Endothelial cell of umbilical vein (primary cell): ENCODE measurements at regions of chr3 and their contacts with region 1.

Region 1: DNA sequence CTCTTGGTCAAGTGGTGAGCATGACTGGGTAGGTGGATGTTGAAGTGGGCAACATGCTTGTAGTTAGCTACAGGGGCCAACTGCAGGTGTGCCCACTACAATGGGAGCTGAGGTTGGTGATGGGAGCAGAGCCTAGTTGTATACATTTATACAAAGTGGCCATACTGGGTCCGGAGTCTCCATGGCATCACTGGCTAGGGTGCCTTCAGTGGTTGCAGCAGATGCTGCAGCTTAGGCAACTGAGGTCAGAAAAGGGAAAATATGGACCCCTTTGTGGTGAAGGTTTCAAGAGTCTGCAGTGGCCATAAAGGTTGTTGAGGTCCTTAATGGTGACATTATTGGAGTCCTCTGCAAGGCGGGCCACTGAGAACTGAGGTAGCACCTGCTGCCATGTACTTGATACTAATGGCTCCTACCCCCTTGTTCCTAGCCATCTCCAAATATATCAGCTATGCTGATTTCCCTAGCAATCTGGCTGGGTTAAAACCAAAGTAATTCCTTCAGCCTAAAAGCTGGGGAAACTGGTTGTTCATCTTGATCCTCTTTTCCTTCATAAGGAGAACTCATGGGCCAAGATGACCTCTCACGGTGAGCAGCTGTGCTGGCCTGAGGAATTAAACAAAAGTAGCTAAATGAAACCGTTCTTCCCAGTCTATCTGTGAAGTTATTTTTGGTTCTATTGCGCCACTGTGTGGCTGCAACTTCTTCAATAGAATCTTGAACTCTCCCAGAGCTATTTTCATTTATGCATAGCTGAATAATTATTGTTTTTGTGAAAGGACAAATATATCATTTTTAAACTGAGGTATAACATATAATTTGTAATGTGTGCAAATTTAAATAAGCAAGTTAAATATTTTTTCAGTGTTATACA is 76.0 kb upstream of the PLSCR4 start:
- DNase-seq: peak; percentile 85
- H3K4me3 ChIP-seq: no peak overlapping the region
- H3K27ac ChIP-seq: no peak overlapping the region
- H3K4me1 ChIP-seq: peaks cover 2% of the 10 kb centered on the region
- H3K27me3 ChIP-seq: no peaks in the 10 kb centered on the region
- CTCF ChIP-seq: peak; percentile 49 to 52
- POLR2A ChIP-seq: no peak

Region 2: DNA sequence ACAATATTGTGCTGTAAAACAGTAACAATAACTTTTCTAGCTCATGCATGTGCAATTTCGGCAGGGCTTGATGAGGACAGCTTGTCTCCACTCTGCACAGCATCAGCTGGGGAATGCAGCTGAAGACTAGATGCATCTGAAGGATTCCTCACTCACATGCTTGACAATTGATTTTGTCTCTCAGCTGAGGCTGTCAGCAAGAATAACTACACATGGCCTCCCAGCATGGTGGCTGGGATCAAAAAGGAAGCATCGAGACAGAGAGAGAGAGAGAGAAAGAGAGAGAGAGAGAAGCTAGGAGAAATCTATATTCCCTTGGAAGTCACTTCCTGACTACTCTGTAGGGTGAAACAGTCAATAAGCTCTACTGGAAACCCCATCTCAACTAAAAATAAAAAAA is 653.1 kb before region 1 on chr3:
- CTCF ChIA-PET with region 1: no interaction called
- POLR2A ChIA-PET with region 1: no interaction called
- dilution Hi-C with region 1: no loop called
- intact Hi-C with region 1: no loop called
- DNase-seq: no peak
- H3K4me3 ChIP-seq: no peak overlapping the region
- H3K27ac ChIP-seq: no peak overlapping the region
- H3K4me1 ChIP-seq: no peaks in the 10 kb centered on the region
- H3K27me3 ChIP-seq: no peaks in the 10 kb centered on the region
- CTCF ChIP-seq: no peak
- POLR2A ChIP-seq: no peak

Region 3: GRCh38 chr3:146065573-146066006 is 261.3 kb before region 1 on chr3:
- CTCF ChIA-PET with region 1: interaction called, 101 read pairs
- POLR2A ChIA-PET with region 1: no interaction called
- dilution Hi-C with region 1: no loop called
- intact Hi-C with region 1: loop called (anchors 1 kb)
- DNase-seq: peak; percentile 80
- H3K4me3 ChIP-seq: no peak overlapping the region
- H3K27ac ChIP-seq: no peak overlapping the region
- H3K4me1 ChIP-seq: peaks cover 4% of the 10 kb centered on the region
- H3K27me3 ChIP-seq: no peaks in the 10 kb centered on the region
- CTCF ChIP-seq: peak; percentile 27 to 30
- POLR2A ChIP-seq: no peak

Region 4: DNA sequence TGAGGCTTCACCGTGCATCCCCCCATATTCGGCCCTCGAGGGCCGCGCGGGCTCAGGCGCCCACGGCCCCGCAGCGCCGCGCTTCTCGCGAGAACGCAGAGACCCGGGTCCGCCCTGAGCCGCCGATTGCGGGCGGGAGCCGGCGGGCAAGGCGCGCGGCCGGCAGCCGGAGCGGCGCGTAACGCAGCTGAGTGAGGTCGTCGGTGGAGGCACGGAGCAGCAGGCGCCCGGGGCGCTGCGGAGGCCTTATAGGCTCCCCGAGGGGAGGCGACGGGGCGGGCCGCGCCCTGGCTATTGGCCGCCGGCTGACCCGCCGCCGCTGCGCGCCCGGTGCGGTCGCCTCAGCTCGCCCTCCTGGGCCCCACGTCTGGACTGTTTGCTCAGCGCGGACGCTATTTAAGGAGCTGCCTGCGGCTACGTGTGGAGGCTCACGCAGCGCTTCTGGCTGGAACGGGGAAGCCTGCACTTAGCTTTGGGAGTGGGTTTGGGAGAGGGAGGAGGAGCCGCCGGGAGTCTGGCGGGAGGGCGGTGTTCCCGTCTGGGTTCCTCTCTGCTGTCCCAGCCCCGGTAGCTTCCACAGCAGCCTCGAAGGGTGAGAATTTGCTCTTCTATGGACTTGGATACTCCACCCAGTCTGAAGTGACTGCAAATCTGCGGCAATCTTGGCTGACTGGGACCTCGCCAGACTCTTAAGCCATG is 165.8 kb before region 1 on chr3 and contains the start of gene PLOD2:
- CTCF ChIA-PET with region 1: interaction called, 16 read pairs
- POLR2A ChIA-PET with region 1: interaction called, 3 read pairs
- dilution Hi-C with region 1: no loop called
- intact Hi-C with region 1: loop called (anchors 1 kb)
- DNase-seq: peak; percentile 90
- H3K4me3 ChIP-seq: peak within 1 kb of the TSS; percentile 55 to 94 (median 80)
- H3K27ac ChIP-seq: peak within 1 kb of the TSS; percentile 90
- H3K4me1 ChIP-seq: peaks cover 72% of the 10 kb centered on the region
- H3K27me3 ChIP-seq: no peaks in the 10 kb centered on the region
- CTCF ChIP-seq: no peak
- POLR2A ChIP-seq: peak; percentile 98
- total RNA-seq, gene PLOD2: 193 and 228 TPM in 2 replicates

Region 5: GRCh38 chr3:146189519-146190173 is 137.3 kb before region 1 on chr3:
- CTCF ChIA-PET with region 1: interaction called, 347 read pairs
- POLR2A ChIA-PET with region 1: interaction called, 7 read pairs
- dilution Hi-C with region 1: no loop called
- intact Hi-C with region 1: loop called (anchors 1 kb)
- DNase-seq: peak; percentile 70
- H3K4me3 ChIP-seq: no peak overlapping the region
- H3K27ac ChIP-seq: peak overlapping the region; percentile 43
- H3K4me1 ChIP-seq: peaks cover 21% of the 10 kb centered on the region
- H3K27me3 ChIP-seq: no peaks in the 10 kb centered on the region
- CTCF ChIP-seq: peak; percentile 62 to 68
- POLR2A ChIP-seq: no peak

Region 6: GRCh38 chr3:146227486-146227885 is 99.4 kb before region 1 on chr3:
- CTCF ChIA-PET with region 1: interaction called, 69 read pairs
- POLR2A ChIA-PET with region 1: interaction called, 5 read pairs
- dilution Hi-C with region 1: no loop called
- intact Hi-C with region 1: no loop called
- DNase-seq: no peak
- H3K4me3 ChIP-seq: no peak overlapping the region
- H3K27ac ChIP-seq: no peak overlapping the region
- H3K4me1 ChIP-seq: peaks cover 16% of the 10 kb centered on the region
- H3K27me3 ChIP-seq: no peaks in the 10 kb centered on the region
- CTCF ChIP-seq: no peak
- POLR2A ChIP-seq: no peak

Region 7: GRCh38 chr3:146250449-146251382 is 76.2 kb before region 1 on chr3 and contains the start of gene PLSCR4:
- CTCF ChIA-PET with region 1: interaction called, 65 read pairs
- POLR2A ChIA-PET with region 1: interaction called, 3 read pairs
- dilution Hi-C with region 1: no loop called
- intact Hi-C with region 1: loop called (anchors 1 kb)
- DNase-seq: peak; percentile 93
- H3K4me3 ChIP-seq: peak within 1 kb of the TSS; percentile 94 to 97 (median 96)
- H3K27ac ChIP-seq: peak within 1 kb of the TSS; percentile 77
- H3K4me1 ChIP-seq: peaks cover 36% of the 10 kb centered on the region
- H3K27me3 ChIP-seq: no peaks in the 10 kb centered on the region
- CTCF ChIP-seq: no peak
- POLR2A ChIP-seq: peak; percentile 35
- total RNA-seq, gene PLSCR4: 81.5 and 91.8 TPM in 2 replicates

Region 8: GRCh38 chr3:146544002-146544928 is 217.4 kb after region 1 on chr3 and contains the start of gene PLSCR1:
- CTCF ChIA-PET with region 1: interaction called, 11 read pairs
- POLR2A ChIA-PET with region 1: no interaction called
- dilution Hi-C with region 1: no loop called
- intact Hi-C with region 1: no loop called
- DNase-seq: peak; percentile 99
- H3K4me3 ChIP-seq: peak within 1 kb of the TSS; percentile 66 to 78 (median 66)
- H3K27ac ChIP-seq: peak within 1 kb of the TSS; percentile 78
- H3K4me1 ChIP-seq: peaks cover 9% of the 10 kb centered on the region
- H3K27me3 ChIP-seq: no peaks in the 10 kb centered on the region
- CTCF ChIP-seq: no peak
- POLR2A ChIP-seq: peak; percentile 74
- total RNA-seq, gene PLSCR1: 65.6 and 78.7 TPM in 2 replicates